Activated CD4-positive, alpha-beta memory T cell treated with anti-CD3 and anti-CD28 coated beads for 36 hours (primary cell): ENCODE measurements at regions of chr5 and their contacts with region 1.

Region 1: GRCh38 chr5:41924872-41925554 is at the start of gene FBXO4:
- DNase-seq: peak; percentile 93
- H3K4me3 Mint-ChIP-seq: peak within 1 kb of the TSS; percentile 90
- H3K27ac Mint-ChIP-seq: peak within 1 kb of the TSS; percentile 92
- H3K4me1 Mint-ChIP-seq: peaks cover 23% of the 10 kb centered on the region
- H3K27me3 Mint-ChIP-seq: no peaks in the 10 kb centered on the region
- total RNA-seq, gene FBXO4: 20.4 to 21.7 TPM

Region 2: DNA sequence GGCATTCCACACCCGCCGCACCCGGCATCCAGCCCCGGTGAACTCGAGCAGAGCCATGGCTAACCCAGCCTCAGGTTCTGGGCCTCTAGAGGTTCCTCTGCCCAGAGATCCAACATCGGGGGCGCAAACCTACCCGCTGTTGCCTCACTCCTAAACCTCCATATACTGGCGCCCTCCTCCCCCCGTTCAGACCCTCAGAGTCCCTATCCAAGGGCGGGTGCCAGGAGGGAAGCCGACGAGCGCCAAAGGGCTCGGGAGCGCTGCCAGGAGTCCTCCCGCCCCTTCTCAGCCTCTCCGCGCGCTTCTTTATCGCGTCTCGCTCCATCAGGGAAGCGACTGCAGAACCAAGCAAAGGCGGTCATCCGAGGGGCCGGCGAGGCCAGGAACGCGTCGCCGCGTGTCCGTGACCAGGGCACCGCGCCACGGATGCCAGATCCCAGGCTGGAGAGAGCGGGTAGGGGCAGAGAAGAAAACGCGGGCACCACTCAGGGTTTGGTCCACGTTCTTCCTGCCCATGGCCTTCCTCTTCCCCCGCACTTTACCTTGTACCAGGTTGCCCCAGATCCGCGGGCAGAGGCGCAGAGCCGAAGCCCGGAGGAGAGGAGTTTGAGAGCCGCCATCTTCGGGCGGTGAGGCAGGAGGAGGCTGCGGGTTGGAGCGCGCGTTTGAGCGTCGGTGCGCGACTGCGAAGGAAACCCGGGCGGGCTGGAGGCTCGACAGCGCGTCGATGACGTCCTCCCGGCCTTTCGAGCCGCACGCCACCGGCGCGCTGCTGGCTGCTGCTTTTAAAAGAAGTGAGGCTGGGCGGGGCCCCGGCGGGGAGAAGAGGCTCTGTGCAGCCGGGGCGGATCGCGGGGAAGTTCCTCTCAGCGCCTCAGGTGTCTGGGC is 55.0 kb before region 1 on chr5 and contains the start of gene OXCT1:
- CTCF ChIA-PET with region 1: interaction called, 3 read pairs
- POLR2A ChIA-PET with region 1: interaction called, 5 read pairs
- intact Hi-C with region 1: loop called (anchors 1 kb)
- DNase-seq: peak; percentile 95
- H3K4me3 Mint-ChIP-seq: peak within 1 kb of the TSS; percentile 92
- H3K27ac Mint-ChIP-seq: peak within 1 kb of the TSS; percentile 87
- H3K4me1 Mint-ChIP-seq: peaks cover 56% of the 10 kb centered on the region
- H3K27me3 Mint-ChIP-seq: no peaks in the 10 kb centered on the region
- total RNA-seq, gene OXCT1: 110 to 117 TPM

Region 3: GRCh38 chr5:41903892-41904799 is 20.9 kb before region 1 on chr5 and contains the start of gene RIMOC1:
- CTCF ChIA-PET with region 1: interaction called, 5 read pairs
- POLR2A ChIA-PET with region 1: interaction called, 19 read pairs
- intact Hi-C with region 1: loop called (anchors 1 kb)
- DNase-seq: peak; percentile 99
- H3K4me3 Mint-ChIP-seq: peak within 1 kb of the TSS; percentile 91
- H3K27ac Mint-ChIP-seq: peak within 1 kb of the TSS; percentile 93
- H3K4me1 Mint-ChIP-seq: peaks cover 37% of the 10 kb centered on the region
- H3K27me3 Mint-ChIP-seq: peaks cover 2% of the 10 kb centered on the region
- total RNA-seq, gene RIMOC1: 25.0 to 25.8 TPM